Activated CD4-positive, alpha-beta T cell treated with anti-CD3 and anti-CD28 coated beads, Interleukin-2, amount 10 ng/mL, durations not matched to agents 7 days and 5 days (primary cell): ENCODE measurements at regions of chr1 and their contacts with region 1.

Region 1: DNA sequence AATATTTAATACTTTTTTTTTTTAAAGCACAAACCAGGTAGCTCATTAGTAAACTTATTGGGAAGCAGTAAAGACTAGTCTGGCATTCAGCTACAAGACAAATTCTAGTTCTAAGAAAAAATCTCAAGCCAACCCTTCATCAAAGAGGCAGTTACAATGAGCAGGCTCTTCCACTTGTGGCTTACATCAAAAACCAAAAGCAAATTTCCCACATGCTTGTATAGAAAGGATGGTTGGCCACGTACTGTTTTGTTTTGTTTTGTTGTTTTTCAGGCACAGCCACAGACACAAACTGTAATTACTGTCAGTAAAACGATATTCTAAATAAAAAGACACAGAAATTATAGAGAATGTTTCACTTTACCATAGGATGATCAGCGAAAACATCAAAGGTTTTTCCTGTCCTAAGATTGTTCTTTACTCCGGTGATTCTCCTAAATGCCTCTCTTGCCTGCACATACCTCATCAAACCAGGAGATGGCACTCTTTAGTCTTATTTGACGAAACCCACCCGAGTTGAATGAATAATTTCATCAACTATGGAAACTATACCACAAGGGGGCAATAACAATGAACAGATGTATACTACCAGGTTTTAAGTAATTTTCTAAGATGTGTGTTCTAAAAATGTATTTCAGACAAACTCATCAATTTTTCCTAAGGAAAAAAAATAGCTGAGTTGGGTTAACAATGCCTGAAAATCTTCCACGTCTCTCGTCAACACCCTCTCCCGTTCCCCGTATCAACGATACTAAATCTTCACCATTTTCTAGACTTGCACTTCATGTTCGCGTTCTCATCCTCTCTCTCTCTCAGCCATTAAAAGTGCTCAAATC is 26.9 kb downstream of the RPL5 start:
- DNase-seq: peak; percentile 71
- H3K4me3 Mint-ChIP-seq: peak overlapping the region; percentile 33
- H3K27ac Mint-ChIP-seq: peak overlapping the region; percentile 21
- H3K4me1 Mint-ChIP-seq: peaks cover 38% of the 10 kb centered on the region
- H3K27me3 Mint-ChIP-seq: no peaks in the 10 kb centered on the region

Region 2: DNA sequence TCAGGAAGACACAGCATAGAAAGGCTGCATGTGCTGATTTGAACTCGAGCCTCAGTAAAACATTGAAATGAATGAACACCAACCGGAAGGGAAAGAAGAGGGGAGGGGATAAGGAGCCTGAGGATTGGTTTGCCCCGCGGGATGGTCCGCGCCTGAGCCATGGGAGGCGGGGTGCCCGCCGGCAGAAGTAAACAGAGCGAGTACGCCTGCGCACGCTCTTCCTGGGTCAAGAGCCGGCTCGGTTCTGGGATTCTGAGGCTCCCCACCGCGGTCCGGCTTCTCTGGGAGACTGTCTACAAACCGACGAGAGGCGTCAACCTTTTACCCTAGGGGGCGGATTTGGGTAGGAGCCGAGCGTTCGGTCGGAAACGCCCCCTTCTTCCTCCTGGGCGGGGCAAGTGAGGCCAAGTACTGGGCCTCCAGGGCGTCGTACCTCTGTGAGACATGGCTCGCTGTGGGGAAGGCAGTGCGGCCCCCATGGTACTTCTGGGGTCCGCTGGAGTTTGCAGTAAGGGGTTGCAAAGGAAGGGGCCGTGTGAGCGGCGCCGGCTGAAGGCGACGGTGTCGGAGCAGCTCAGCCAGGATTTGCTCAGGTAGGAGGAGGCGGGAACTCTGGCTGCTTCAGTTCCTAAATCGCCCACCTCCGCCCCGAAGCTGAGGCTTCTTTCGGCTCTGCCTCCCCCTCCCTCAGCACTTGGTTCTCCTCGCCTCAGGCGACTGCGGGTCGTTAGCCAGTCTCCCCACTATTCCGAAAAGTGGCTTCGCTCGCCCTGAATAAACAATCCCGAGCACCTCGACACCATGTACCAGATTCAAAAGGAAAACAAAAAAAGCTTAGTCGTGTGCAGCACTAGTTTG is 778.4 kb before region 1 on chr1 and contains the start of gene BTBD8:
- CTCF ChIA-PET with region 1: no interaction called
- POLR2A ChIA-PET with region 1: no interaction called
- DNase-seq: peak; percentile 87
- H3K4me3 Mint-ChIP-seq: peak within 1 kb of the TSS; percentile 98
- H3K27ac Mint-ChIP-seq: peak within 1 kb of the TSS; percentile 95
- H3K4me1 Mint-ChIP-seq: peaks cover 17% of the 10 kb centered on the region
- H3K27me3 Mint-ChIP-seq: no peaks in the 10 kb centered on the region
- total RNA-seq, gene BTBD8: 1.6 to 2.7 TPM

Region 3: DNA sequence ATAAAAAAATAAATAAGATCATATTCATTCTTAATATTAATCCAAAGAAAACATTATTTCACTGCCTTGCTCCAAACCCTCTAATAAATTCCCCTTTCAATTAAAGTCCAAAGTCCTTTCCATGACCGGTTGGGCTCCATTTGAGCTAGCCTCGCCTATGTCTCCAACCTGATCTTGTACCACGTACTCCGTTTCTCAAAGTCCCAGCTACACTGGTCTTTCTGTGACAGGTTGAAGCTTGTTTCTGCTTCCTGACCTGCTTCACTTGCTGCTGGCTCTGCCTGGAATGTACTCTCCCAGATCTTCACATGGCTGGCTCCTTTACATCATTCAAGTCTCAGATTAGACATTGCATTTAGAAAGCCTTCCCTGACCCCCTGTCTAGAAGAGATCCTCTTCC is 10.6 kb before region 1 on chr1:
- CTCF ChIA-PET with region 1: interaction called, 16 read pairs
- POLR2A ChIA-PET with region 1: no interaction called
- DNase-seq: no peak
- H3K4me3 Mint-ChIP-seq: no peak overlapping the region
- H3K27ac Mint-ChIP-seq: no peak overlapping the region
- H3K4me1 Mint-ChIP-seq: peaks cover 5% of the 10 kb centered on the region
- H3K27me3 Mint-ChIP-seq: no peaks in the 10 kb centered on the region

Region 4: GRCh38 chr1:92870591-92870990 is 11.8 kb after region 1 on chr1:
- CTCF ChIA-PET with region 1: interaction called, 11 read pairs
- POLR2A ChIA-PET with region 1: no interaction called
- DNase-seq: no peak
- H3K4me3 Mint-ChIP-seq: no peak overlapping the region
- H3K27ac Mint-ChIP-seq: no peak overlapping the region
- H3K4me1 Mint-ChIP-seq: peaks cover 7% of the 10 kb centered on the region
- H3K27me3 Mint-ChIP-seq: no peaks in the 10 kb centered on the region

Region 5: DNA sequence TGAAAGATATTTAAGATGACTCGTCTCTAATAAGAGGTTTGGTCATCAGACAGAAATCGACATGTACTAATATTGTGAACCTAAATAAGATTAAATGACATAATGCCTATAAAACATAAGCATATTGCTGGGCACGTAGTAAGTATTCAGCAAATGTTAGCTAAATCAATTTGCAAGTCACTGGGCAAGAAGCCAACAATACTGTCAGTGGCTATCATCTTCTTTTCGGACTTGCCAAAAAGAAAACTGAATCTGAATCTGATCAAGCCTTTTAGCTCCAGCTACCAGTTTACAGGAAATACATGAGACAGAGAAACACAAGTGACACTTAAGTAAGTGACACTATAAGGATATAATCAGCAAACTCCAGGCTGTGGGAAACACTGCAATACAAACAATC is 19.0 kb after region 1 on chr1:
- CTCF ChIA-PET with region 1: interaction called, 11 read pairs
- POLR2A ChIA-PET with region 1: no interaction called
- DNase-seq: no peak
- H3K4me3 Mint-ChIP-seq: peak overlapping the region; percentile 56
- H3K27ac Mint-ChIP-seq: peak overlapping the region; percentile 73
- H3K4me1 Mint-ChIP-seq: peaks cover 38% of the 10 kb centered on the region
- H3K27me3 Mint-ChIP-seq: no peaks in the 10 kb centered on the region